A549 (cell line): ENCODE measurements at regions of chr2 and their contacts with region 1.

Region 1: GRCh38 chr2:177332041-177332991 is 60.3 kb upstream of the AGPS start:
- DNase-seq: peak; percentile 32 to 69
- ATAC-seq: peak; percentile 86 to 91
- H3K4me3 ChIP-seq: no peak overlapping the region
- H3K27ac ChIP-seq: peak overlapping the region; percentile 10 to 69; a peak in 3 of 6 replicates
- H3K4me1 ChIP-seq: peaks cover 12% of the 10 kb centered on the region; the same call in 2 of the 3 replicates
- CTCF ChIP-seq: peak; percentile 83
- EP300 ChIP-seq: no peak
- POLR2A ChIP-seq: no peak
- RAD21 ChIP-seq: peak; percentile 86 to 90

Region 2: DNA sequence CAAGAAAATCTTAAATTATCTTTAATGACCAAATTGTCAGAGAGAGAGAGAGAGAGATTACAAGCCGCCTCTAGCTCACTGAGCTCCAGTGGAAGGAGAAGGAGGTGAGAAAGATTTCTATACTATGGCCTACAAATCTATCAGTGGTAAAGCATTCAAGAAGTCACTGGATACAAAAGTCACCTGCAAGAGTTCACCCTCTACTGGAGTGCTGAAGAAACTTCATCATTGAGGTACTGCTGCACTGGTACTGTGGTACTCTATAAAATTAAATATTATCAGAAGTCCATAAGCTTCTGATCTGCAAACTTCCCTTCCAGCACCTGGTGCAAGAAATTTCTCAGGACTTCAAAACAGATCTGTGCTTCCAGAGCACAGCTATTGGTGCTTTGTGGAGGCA is 12.0 kb after region 1 on chr2:
- CTCF ChIA-PET with region 1: interaction called, 14 read pairs
- POLR2A ChIA-PET with region 1: no interaction called
- DNase-seq: peak in 1 of 2 experiments; percentile 13
- ATAC-seq: peak in 1 of 2 experiments; percentile 77; a peak in 3 of 6 replicates
- H3K4me3 ChIP-seq: no peak overlapping the region
- H3K27ac ChIP-seq: no peak overlapping the region
- H3K4me1 ChIP-seq: no peaks in the 10 kb centered on the region
- CTCF ChIP-seq: no peak
- EP300 ChIP-seq: no peak
- POLR2A ChIP-seq: no peak
- RAD21 ChIP-seq: no peak; a peak in 1 of 5 replicates

Region 3: GRCh38 chr2:177359836-177360595 is 27.7 kb after region 1 on chr2:
- CTCF ChIA-PET with region 1: interaction called, 14 read pairs
- POLR2A ChIA-PET with region 1: no interaction called
- DNase-seq: no peak
- ATAC-seq: no peak
- H3K4me3 ChIP-seq: no peak overlapping the region
- H3K27ac ChIP-seq: no peak overlapping the region
- H3K4me1 ChIP-seq: no peaks in the 10 kb centered on the region
- CTCF ChIP-seq: no peak
- EP300 ChIP-seq: no peak
- POLR2A ChIP-seq: no peak
- RAD21 ChIP-seq: no peak

Region 4: GRCh38 chr2:177419274-177419673 is 87.0 kb after region 1 on chr2:
- CTCF ChIA-PET with region 1: interaction called, 106 read pairs
- POLR2A ChIA-PET with region 1: no interaction called
- DNase-seq: no peak
- ATAC-seq: no peak
- H3K4me3 ChIP-seq: no peak overlapping the region
- H3K27ac ChIP-seq: peak overlapping the region; percentile 35 to 63; a peak in 4 of 6 replicates
- H3K4me1 ChIP-seq: peaks cover 62% of the 10 kb centered on the region
- CTCF ChIP-seq: no peak
- EP300 ChIP-seq: no peak
- POLR2A ChIP-seq: no peak
- RAD21 ChIP-seq: no peak

Region 5: DNA sequence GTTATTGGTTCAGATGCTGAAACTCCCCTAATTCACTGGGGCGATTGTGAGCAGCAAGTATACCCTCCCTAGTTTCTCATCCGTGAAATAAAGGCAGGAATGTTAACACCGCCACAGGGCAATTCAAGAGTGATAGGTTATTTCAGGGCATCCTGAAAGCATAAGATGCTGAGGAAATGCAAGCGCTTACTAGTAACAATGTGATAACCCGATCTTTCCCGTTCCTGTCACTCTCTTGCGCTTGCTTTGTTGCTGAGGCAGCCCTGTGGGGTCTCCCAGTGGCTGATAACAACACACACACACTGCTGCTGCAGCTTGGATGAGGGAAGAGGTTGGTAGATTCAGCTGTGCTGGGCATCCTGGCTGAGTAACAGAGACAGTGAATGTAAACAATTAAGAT is 319.5 kb after region 1 on chr2:
- CTCF ChIA-PET with region 1: no interaction called
- POLR2A ChIA-PET with region 1: no interaction called
- DNase-seq: no peak
- ATAC-seq: no peak; a peak in 1 of 6 replicates
- H3K4me3 ChIP-seq: no peak overlapping the region
- H3K27ac ChIP-seq: no peak overlapping the region
- H3K4me1 ChIP-seq: no peaks in the 10 kb centered on the region
- CTCF ChIP-seq: no peak
- EP300 ChIP-seq: no peak
- POLR2A ChIP-seq: no peak
- RAD21 ChIP-seq: no peak